Activated T-helper 1 cell treated with anti-CD3 and anti-CD28 coated beads, Interleukin-12 subunit alpha, Interleukin-12 subunit beta, Interleukin-2, Interleukin-4 antibody, amounts not matched to agents 30 ng/mL and 10 ng/mL and 1 ng/mL, durations not matched to agents 14 hours and 24 hours and 36 hours (primary cell): ENCODE measurements at regions of chr6 and their contacts with region 1.

Region 1: DNA sequence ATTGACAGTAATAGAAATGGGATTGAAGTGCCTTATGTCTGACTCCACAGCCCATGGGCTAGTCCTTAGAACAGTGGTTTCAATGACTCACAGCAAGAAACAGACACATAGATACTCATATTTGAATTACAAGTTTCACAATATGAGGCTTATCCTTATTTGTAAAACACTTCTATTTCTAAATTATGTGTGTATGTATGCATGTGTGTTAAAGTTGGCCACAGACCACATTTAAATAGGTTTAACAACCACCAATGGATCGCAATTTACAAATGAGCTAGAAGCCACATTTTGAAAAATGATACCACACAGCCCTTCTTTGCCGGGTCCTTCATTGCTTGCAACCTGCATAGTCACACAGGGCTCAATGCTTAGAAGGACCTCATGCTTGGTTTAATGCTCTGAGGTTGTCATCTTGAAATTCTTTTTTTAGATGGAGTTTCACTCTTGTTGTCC is 157.8 kb upstream of the PREP start:
- DNase-seq: no peak
- H3K4me3 Mint-ChIP-seq: no peak overlapping the region
- H3K27ac Mint-ChIP-seq: no peak overlapping the region
- H3K4me1 Mint-ChIP-seq: peaks cover 14% of the 10 kb centered on the region
- H3K27me3 Mint-ChIP-seq: peaks cover 5% of the 10 kb centered on the region

Region 2: DNA sequence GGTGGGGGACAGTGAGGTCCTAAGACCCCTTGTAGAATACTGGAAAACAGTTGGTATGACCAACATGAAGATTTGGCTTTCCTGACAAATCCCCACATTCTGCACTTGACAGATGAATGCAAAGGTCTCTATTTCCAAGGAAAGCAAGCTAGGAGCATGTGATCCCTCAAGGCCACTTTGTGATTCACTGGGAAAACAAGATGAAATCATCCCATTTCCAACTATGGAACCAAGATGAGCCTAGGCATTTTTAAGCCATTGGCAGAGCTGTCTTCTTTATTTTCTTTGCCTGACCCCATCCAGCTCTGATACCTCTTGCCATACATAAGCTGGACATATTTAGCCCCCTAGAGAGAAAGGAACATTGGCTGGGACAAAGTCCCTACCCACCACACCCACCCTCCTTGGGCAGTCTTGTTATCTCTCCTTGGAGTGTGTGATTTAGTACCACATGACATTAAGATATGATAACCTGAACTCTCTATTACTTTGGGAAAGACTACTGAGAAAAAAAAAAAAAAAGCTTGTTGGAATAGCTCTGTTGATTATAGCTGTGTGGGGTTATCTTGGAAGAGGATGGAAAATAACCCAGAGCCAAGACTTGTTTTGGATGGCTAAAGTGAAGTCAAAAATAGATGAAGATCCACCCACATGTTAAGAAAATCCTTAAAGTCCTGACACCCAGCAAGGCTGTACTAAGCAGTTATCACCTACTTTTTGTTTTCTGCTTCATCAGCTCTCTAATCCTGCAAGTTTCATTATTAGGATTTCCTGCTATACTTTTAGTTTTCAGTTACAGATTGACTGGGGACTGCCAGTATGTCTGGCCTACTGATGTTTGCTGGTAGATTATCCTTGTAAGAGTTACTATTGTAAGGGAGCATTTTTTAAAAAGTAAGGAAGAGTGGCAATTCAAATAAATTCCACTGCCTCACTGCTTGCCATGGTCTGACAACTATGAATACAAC is 67.6 kb before region 1 on chr6:
- intact Hi-C with region 1: loop called (anchors 2 kb)
- DNase-seq: no peak
- H3K4me3 Mint-ChIP-seq: peak overlapping the region; percentile 21
- H3K27ac Mint-ChIP-seq: peak overlapping the region; percentile 78
- H3K4me1 Mint-ChIP-seq: peaks cover 26% of the 10 kb centered on the region
- H3K27me3 Mint-ChIP-seq: no peaks in the 10 kb centered on the region

Region 3: DNA sequence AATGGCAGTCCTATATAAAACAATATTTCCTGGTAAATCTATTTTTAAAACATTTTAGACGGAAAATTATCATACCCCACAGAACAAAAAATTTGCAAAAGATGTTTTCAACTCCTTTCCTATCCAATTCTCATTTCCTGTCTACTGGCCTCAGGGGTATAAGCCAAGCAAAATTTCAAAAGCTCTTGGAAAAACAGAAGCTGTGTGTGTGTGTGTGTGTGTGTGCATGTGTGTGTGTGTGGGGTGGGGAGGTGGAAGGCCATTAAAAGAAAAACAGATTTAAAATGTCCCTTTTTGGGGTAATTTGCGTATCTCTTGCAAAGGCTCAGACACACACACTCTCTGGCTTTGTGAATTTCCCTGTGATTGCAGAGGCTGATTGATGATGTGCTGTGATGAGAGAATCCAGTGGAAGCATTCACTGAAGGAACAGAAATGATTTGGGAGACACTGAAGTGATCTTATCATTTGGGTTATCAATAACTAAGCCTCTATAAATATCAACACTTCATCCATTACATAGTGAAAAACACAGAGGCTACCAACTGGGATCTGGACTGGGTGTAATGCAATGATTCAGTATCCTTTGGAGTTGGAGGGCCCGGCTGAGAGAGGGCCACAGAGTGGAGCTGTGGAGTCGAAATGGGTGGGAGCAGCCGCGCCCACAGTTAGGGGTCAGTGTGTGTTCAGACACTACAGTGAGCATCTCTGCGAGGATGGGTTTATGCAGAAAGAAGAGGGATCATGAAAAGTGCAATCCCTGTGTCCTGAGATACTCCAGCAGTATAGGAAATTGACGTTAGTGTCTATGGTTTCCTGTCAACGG is 50.9 kb before region 1 on chr6:
- intact Hi-C with region 1: loop called (anchors 5 kb)
- DNase-seq: no peak
- H3K4me3 Mint-ChIP-seq: no peak overlapping the region
- H3K27ac Mint-ChIP-seq: peak overlapping the region; percentile 1
- H3K4me1 Mint-ChIP-seq: peaks cover 32% of the 10 kb centered on the region
- H3K27me3 Mint-ChIP-seq: peaks cover 27% of the 10 kb centered on the region

Region 4: DNA sequence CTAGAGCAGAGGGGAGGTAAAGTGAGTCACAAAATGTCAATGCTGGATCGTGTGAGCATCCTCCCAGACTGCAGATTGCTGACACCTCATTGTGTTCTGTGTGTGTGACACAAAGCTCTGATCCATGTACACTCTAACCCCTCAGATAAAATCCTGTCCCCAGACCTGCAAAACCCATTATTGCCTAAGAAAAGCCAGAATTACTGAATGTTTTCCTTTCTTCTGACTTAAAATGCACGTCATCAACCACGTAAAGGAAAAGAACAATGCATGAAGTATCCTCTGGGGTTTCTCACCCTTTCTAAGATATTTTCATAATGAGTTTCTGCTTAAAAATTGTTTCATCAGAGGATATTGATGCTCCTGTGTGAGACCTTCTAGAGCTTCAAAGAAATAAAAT is 60.2 kb after region 1 on chr6:
- intact Hi-C with region 1: loop called (anchors 1 kb)
- DNase-seq: peak; percentile 19
- H3K4me3 Mint-ChIP-seq: peak overlapping the region; percentile 46
- H3K27ac Mint-ChIP-seq: peak overlapping the region; percentile 91
- H3K4me1 Mint-ChIP-seq: peaks cover 46% of the 10 kb centered on the region
- H3K27me3 Mint-ChIP-seq: peaks cover 2% of the 10 kb centered on the region

Region 5: GRCh38 chr6:105862936-105863607 is 302.4 kb after region 1 on chr6:
- intact Hi-C with region 1: no loop called
- DNase-seq: no peak
- H3K4me3 Mint-ChIP-seq: no peak overlapping the region
- H3K27ac Mint-ChIP-seq: no peak overlapping the region
- H3K4me1 Mint-ChIP-seq: peaks cover 8% of the 10 kb centered on the region
- H3K27me3 Mint-ChIP-seq: peaks cover 25% of the 10 kb centered on the region